ENCODE measurements at regions of chr17 and their contacts with region 1.

Region 1: GRCh38 chr17:64326395-64327054 is 63.5 kb upstream of the TEX2 start:
- DNase-seq: peak; percentile 80 to 93 (median 89)
- ATAC-seq: peak; percentile 67 to 91 (median 81)
- H3K4me3 ChIP-seq: no peak overlapping the region
- H3K27ac ChIP-seq: peak overlapping the region; percentile 72 to 91 (median 85)
- H3K4me1 ChIP-seq: peaks cover 5 to 84% (median 51%) of the 10 kb centered on the region in 12 donors
- H3K27me3 ChIP-seq: no peaks in the 10 kb centered on the region
- CTCF ChIP-seq: no peak
- POLR2A ChIP-seq: peak in 1 of 2 donors; percentile 24

Region 2: DNA sequence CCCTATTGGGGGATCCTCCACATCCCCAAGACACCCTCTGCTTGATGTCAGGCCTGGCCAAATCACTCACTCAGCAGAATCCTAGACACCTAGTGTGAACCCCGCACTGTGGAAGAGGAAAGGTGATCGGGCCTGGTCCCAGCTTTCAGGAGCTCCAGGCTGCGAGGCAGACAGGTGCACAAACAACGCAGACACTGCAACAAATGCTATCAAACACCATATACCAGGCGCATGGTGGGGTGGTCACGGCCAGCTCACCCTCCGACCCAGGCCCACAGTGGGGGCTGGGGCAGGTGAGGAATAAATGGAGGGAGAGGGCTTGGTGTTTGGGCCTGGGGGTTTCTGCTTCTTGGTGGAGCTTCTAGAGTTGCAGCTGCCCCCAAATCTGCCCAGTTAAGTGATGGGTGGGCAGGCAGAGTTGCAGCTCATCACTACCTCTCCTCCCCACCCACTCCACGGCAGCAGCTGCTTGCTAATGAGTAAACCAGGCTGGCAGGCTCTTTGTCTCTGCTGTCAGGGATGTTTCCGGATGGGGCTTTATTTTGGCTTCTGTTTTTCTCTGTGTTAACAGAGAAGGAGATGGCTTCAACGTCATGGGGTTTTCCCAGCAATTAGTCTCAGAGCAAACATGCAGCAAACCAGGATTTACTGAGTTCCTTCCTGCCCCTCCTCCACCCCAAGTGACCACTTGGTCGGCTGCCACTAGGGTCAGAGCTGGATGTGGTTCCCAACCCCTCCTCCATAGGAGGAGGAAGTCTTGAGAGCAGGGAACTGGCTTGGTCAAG is 17.5 kb after region 1 on chr17:
- intact Hi-C with region 1: loop called in 3 of 10 experiments (anchors 2 kb)
- DNase-seq: peak; percentile 84 to 90 (median 89)
- ATAC-seq: peak; percentile 75 to 91 (median 89)
- H3K4me3 ChIP-seq: no peak overlapping the region
- H3K27ac ChIP-seq: peak overlapping the region; percentile 31 to 95 (median 78)
- H3K4me1 ChIP-seq: peaks cover 7 to 78% (median 41%) of the 10 kb centered on the region in 12 donors
- H3K27me3 ChIP-seq: no peaks in the 10 kb centered on the region
- CTCF ChIP-seq: no peak
- POLR2A ChIP-seq: no peak

Region 3: DNA sequence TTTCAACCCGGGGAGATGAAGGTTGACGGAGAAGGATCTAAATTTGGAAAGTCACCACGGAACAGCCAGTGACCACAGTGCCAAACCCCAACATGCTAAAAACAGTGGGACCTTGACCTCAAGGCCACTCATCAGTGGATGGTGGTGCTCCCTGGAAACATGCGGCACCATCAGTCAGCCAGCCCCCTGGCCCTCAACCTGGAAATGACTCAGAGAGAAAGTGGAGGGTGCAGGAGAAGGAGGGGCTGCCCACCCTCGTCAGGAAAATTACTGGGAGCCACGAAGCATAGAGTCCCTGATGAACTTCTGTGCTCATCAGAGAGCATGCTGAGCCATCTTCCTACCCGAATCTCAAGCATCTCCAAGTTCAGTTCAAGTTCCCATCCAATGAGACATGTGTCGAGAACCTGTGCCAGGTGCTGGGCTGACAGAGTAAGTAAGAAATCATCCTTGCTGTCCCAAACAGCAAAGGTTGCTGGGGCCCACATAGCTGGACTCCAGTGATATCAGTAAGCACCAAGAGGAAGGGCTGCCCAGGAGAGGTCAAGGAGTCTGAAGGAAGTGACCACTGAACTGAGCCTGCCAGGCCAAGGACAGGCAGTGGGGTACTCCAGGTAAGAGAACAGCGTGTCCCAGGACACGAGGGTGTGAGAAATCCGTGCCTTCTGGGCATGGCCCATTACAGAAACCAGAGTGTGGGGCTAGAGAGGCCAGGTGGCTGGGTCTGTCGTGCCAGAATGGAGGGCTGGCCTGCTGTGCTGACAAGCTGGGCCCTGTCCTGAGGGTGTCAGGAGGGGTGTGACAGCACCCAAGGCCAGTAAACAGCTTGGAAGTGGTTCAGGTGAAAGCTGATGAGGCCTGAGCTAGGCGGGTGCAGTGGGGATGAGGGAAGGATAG is 58.9 kb after region 1 on chr17:
- intact Hi-C with region 1: loop called in 4 of 10 experiments (anchors 2 to 10 kb)
- DNase-seq: peak; percentile 49 to 81 (median 58)
- ATAC-seq: peak; percentile 66 to 86 (median 84)
- H3K4me3 ChIP-seq: peak overlapping the region in 10 of 12 donors; percentile 3 to 63 (median 53)
- H3K27ac ChIP-seq: peak overlapping the region; percentile 3 to 95 (median 86)
- H3K4me1 ChIP-seq: peaks cover 0 to 94% (median 33%) of the 10 kb centered on the region in 12 donors
- H3K27me3 ChIP-seq: no peaks in the 10 kb centered on the region
- CTCF ChIP-seq: no peak
- POLR2A ChIP-seq: no peak

Region 4: DNA sequence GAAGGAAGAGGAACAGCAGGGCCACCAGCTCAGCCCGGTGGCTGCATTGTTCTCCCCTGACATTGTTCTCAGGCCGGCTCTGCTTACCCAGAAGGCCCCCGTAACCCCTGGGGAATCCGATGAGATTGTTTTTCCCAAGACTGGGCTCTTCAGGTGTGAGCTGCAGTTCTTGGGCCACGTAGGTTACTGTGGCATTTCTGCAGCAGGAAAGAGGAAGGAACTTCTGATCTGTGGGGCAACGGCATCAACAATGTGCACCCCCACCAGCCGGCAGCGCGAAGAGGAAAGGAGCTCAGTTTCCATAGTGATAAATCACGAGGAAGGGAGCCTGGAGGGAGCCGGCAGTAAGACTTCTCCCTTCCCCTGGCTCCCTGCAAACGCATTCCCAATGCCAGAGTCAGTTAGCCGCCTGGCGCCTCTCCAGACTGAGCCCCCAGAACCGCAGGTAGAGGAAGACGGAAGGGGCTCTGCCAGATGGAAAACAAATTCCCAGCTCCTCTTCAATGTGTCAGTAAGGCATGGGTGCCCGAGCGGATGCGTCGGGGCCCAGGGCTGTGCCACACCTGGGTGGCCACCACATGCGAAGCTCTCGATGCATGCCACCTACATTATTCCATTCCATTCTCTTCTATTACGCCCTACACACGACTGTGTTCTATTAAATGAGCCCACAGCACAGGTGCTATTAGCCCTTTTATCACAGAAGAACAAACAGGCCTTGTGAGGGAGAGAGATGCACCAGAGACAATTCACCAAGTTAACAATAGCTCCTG is 85.7 kb after region 1 on chr17:
- intact Hi-C with region 1: loop called in 6 of 10 experiments (anchors 1 to 5 kb)
- DNase-seq: peak; percentile 69 to 78 (median 72)
- ATAC-seq: peak; percentile 47 to 88 (median 73)
- H3K4me3 ChIP-seq: peak overlapping the region in 9 of 12 donors; percentile 1 to 53 (median 22)
- H3K27ac ChIP-seq: peak overlapping the region in 10 of 12 donors; percentile 40 to 89 (median 70)
- H3K4me1 ChIP-seq: peaks cover 0 to 36% (median 14%) of the 10 kb centered on the region in 12 donors
- H3K27me3 ChIP-seq: no peaks in the 10 kb centered on the region
- CTCF ChIP-seq: no peak
- POLR2A ChIP-seq: no peak